CD14-positive monocyte (primary cell): ENCODE measurements at regions of chr5 and their contacts with region 1.

Region 1: DNA sequence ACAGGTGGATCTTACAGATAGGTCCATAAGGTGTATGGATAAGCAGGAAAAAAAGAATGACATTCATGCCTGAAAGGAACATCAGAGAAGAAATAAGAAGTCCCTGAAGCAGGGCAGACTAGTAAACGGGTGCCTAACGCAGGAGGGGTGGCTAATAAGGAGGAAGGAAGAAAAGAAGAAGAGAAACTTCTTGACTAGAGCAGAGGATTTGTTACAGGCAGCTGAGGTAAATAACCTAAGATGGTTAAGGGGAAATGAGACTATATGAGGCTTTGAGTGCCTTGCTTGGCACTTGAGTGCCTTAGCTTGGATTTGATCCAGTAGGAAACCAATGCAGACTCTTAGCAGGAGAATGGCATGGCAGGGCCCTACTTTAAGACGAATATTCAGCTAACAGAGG is 313.5 kb upstream of the PDE4D start:
- DNase-seq: peak; percentile 62 to 85 (median 73)
- H3K4me3 ChIP-seq: no peak overlapping the region
- H3K4me3 Mint-ChIP-seq: peak overlapping the region in 1 of 2 donors; percentile 56
- H3K27ac ChIP-seq: peak overlapping the region in 1 of 2 donors; percentile 54
- H3K27ac Mint-ChIP-seq: peak overlapping the region; percentile 58 to 93 (median 89)
- H3K4me1 ChIP-seq: peaks cover 39 to 42% of the 10 kb centered on the region in 2 donors
- H3K4me1 Mint-ChIP-seq: peaks cover 54% of the 10 kb centered on the region
- H3K27me3 ChIP-seq: no peaks in the 10 kb centered on the region
- H3K27me3 Mint-ChIP-seq: no peaks in the 10 kb centered on the region
- CTCF ChIP-seq: no peak

Region 2: DNA sequence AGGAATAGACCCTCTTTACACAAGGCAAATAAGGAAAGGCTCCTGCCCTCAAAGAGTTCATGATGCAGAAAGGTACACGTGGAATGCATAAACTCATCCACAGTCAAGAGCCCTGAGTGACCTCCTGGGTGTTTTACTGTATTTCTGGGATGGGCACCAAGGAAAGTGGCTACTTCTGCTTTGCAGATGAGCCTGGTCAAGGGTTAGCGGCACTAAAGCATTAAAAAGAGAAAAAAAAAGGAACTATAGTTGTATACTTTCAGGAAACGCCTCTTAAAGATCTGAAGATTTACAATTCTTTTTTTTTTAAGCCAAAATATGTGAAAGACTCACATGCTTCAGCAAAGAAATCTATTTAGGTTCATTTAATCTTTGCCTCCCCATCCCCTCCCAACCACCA is 52.7 kb after region 1 on chr5:
- intact Hi-C with region 1: loop called in 1 of 2 experiments (anchors 10 kb)
- DNase-seq: peak; percentile 46 to 70 (median 53)
- H3K4me3 ChIP-seq: peak overlapping the region in 1 of 3 experiments; percentile 25
- H3K4me3 Mint-ChIP-seq: peak overlapping the region in 1 of 2 donors; percentile 44
- H3K27ac ChIP-seq: peak overlapping the region; percentile 42 to 87
- H3K27ac Mint-ChIP-seq: peak overlapping the region; percentile 74 to 92 (median 88)
- H3K4me1 ChIP-seq: peaks cover 53 to 67% of the 10 kb centered on the region in 2 donors
- H3K4me1 Mint-ChIP-seq: peaks cover 67% of the 10 kb centered on the region
- H3K27me3 ChIP-seq: no peaks in the 10 kb centered on the region
- H3K27me3 Mint-ChIP-seq: no peaks in the 10 kb centered on the region
- CTCF ChIP-seq: no peak